Naive thymus-derived CD4-positive, alpha-beta T cell (primary cell): ENCODE measurements at regions of chr19 and their contacts with region 1.

Region 1: DNA sequence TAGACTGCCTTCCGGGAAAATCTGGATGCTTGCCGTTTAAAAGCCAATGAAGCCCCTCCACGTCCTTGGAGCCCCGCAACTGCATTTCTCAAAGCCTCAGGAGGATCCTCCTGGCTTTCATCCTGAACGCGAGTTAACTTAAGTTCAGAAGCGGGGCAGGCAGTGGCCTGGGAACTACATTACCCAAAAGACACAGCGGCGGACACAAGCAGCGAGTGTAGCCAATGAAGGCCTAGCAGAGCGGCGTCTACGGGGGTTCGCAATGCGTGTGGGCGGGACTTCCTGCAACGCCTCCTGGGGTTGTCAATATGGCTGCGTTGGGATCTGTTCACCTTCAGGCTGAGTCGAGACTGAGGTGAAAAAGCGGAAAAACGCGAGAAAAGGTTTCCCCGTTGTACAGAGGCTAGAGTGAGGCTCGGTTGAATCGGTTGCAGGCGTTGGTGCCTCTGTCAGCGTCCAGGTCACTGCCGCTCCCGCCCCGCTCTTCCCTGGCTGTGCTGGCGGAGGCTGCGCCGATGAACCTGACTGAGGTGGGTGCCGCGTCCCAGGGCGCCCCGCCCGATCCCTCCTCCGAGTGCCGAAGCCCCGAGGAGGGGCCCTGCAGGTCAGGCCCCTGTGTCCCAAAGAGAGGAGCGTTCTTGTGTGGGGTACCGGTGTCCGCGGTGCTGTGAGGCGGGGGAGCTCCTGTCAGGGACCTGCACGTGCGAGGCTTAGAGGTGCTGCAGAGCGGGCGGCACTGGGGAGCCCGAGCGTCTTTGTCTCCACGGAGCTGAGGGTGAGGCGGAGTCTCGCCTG is at the start of gene ZNF17:
- DNase-seq: peak; percentile 72 to 95 (median 88)
- ATAC-seq: peak; percentile 100
- H3K4me3 ChIP-seq: peak within 1 kb of the TSS; percentile 80
- H3K4me3 Mint-ChIP-seq: peak within 1 kb of the TSS; percentile 85 to 97 (median 96)
- H3K27ac ChIP-seq: peak within 1 kb of the TSS; percentile 80
- H3K27ac Mint-ChIP-seq: peak within 1 kb of the TSS; percentile 78 to 96 (median 92)
- H3K4me1 ChIP-seq: peaks cover 3 to 8% of the 10 kb centered on the region in 2 donors
- H3K4me1 Mint-ChIP-seq: peaks cover 20 to 46% (median 34%) of the 10 kb centered on the region in 7 donors
- H3K27me3 ChIP-seq: no peaks in the 10 kb centered on the region
- H3K27me3 Mint-ChIP-seq: no peaks in the 10 kb centered on the region
- total RNA-seq, gene ZNF17: 9.3 to 27.8 (median 17.2) TPM

Region 2: DNA sequence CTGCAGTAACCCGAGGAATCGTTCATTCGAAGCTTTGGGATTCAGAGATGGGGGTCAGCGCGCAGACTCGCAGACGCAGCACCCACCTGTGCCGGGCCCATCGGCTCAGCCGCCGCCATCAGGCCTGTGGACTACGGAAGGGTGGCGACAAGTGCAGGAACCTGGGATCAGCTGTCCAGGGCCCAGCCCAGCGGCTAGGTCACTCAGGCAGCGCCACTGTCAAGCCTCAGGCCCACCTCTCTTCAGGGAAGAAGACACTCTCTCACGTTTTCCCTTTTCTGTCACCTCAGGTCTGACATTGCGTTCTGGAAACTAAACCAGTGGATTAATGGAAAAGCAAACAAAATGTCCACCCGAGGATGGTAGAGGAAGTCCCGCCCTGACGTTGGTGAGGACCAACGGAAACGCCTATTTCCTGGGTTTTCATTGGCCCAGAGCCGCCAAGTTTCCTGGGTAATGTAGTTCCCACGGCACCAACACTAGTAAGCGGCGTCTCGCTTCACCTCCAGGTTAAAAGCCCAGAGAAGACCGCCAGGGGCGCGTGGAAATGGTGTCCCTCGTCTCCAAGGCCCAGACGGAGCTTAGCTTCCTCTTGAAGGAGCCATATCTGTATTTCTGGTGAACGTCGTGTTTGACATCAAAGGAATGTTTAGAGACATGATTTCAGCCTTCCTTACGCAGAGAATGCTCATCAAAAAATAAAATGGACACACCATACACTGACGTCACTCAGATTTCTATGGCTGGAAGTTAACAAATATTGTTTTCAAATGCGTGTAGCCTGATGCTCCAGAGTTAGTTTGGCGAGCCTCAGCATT is 66.3 kb after region 1 on chr19 and contains the start of gene ZNF772:
- CTCF ChIA-PET with region 1: no interaction called
- POLR2A ChIA-PET with region 1: no interaction called
- intact Hi-C with region 1: loop called in 1 of 2 experiments (anchors 1 kb)
- DNase-seq: peak; percentile 55 to 96 (median 88)
- ATAC-seq: peak; percentile 99
- H3K4me3 ChIP-seq: peak within 1 kb of the TSS; percentile 80
- H3K4me3 Mint-ChIP-seq: peak within 1 kb of the TSS; percentile 87 to 95 (median 92)
- H3K27ac ChIP-seq: peak within 1 kb of the TSS; percentile 77
- H3K27ac Mint-ChIP-seq: peak within 1 kb of the TSS; percentile 84 to 96 (median 89)
- H3K4me1 ChIP-seq: peaks cover 5 to 12% of the 10 kb centered on the region in 2 donors
- H3K4me1 Mint-ChIP-seq: peaks cover 10 to 26% (median 19%) of the 10 kb centered on the region in 7 donors
- H3K27me3 ChIP-seq: no peaks in the 10 kb centered on the region
- H3K27me3 Mint-ChIP-seq: peaks cover 0 to 7% (median 0%) of the 10 kb centered on the region in 5 donors
- total RNA-seq, gene ZNF772: 1.5 to 20.5 (median 4.3) TPM

Region 3: DNA sequence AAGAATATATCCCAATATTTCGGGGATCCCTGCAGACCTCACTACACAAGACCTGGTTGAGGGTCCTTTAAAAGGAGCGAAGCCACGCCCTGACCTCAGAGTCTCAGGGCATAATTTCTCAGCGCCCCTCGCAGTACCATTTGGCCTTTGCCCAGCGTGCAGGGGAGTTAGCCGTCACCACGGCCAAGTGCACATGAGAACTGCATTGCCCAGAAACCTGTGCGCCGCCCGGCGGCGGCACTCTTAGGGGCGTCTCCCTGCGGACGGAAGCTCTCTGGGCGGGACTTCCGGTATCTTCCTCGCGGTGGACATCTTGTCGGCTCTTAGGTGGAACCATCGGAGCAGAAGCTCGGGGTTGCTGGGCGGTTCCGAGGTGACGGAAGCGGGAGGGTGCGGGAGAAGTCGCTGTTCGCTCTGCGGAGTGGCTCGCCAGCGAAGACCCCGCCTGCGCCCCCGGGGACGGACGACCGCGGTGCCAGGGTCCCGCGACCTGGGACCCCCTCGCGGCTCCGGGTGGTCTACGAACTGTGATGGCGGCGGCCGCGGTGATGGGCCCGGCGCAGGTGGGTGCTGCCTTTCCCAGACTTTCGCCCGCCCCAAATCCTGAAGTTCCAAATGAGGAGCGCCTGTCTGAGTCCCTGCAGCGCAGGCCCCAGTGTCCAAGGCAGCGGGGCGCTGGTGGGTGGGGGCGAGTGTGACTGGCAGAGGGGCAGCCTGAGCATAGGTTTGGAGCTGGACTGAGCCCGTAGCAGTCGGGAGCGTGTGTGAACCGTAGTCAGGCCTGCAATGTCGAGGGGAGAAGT is 203.1 kb after region 1 on chr19 and contains the start of gene ZNF134:
- CTCF ChIA-PET with region 1: no interaction called
- POLR2A ChIA-PET with region 1: no interaction called
- intact Hi-C with region 1: loop called in 1 of 2 experiments (anchors 1 kb)
- DNase-seq: peak; percentile 74 to 90 (median 84)
- ATAC-seq: peak; percentile 100
- H3K4me3 ChIP-seq: peak within 1 kb of the TSS; percentile 94
- H3K4me3 Mint-ChIP-seq: peak within 1 kb of the TSS; percentile 79 to 95 (median 90)
- H3K27ac ChIP-seq: peak within 1 kb of the TSS; percentile 76
- H3K27ac Mint-ChIP-seq: peak within 1 kb of the TSS; percentile 78 to 92 (median 86)
- H3K4me1 ChIP-seq: peaks cover 14 to 15% of the 10 kb centered on the region in 2 donors
- H3K4me1 Mint-ChIP-seq: peaks cover 18 to 43% (median 34%) of the 10 kb centered on the region in 7 donors
- H3K27me3 ChIP-seq: no peaks in the 10 kb centered on the region
- H3K27me3 Mint-ChIP-seq: no peaks in the 10 kb centered on the region
- total RNA-seq, gene ZNF134: 14.6 to 33.9 (median 25.7) TPM

Region 4: DNA sequence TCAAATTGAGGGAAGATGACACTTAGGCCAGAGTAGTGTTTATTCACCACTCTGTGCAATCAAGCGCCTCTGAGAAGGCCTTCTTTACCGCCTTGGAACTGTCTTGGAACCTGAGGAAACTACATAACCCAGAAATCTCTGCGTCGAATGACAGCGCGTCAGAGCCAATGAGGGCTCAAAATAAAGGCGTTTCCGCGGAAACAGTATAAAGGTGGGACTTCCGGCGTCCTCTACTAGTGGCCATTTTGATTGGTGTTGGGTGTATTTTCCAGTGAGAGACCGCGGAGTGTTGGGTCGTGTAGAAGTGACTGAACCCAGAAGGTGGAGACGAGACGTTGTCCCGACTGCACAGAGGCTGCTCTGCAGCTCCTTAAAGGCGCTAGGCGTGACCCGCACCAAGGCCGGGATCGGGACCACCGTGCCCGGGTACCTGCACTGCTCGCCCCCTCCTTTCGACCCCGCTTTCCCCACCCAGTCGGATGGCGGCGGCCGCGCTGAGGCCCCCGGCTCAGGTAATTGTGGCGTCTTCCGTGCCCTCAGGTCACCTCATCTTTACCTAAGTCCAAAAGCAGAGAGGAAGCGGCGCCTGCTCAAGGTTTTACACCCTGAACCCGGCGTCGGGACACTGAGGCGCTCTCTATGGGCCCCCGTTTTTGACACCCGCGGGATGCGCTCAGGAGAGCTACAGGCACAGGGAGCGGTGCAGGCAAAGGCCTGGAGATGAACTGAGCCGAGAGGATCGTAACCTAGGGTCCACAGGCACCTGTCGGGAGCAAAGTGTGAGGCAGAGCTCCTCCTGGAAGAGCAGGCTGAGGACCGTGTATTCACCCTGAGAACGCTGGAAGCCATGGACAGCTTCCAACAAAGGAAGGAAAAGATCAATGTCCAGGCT is 335.8 kb after region 1 on chr19 and contains the start of gene ZNF776:
- CTCF ChIA-PET with region 1: no interaction called
- POLR2A ChIA-PET with region 1: no interaction called
- intact Hi-C with region 1: loop called (anchors 1 to 5 kb)
- DNase-seq: peak; percentile 40 to 90 (median 84)
- ATAC-seq: peak; percentile 99
- H3K4me3 ChIP-seq: peak within 1 kb of the TSS; percentile 86
- H3K4me3 Mint-ChIP-seq: peak within 1 kb of the TSS; percentile 91 to 99 (median 94)
- H3K27ac ChIP-seq: peak within 1 kb of the TSS; percentile 85
- H3K27ac Mint-ChIP-seq: peak within 1 kb of the TSS; percentile 81 to 99 (median 94)
- H3K4me1 ChIP-seq: peaks cover 6 to 16% of the 10 kb centered on the region in 2 donors
- H3K4me1 Mint-ChIP-seq: peaks cover 13 to 40% (median 26%) of the 10 kb centered on the region in 7 donors
- H3K27me3 ChIP-seq: no peaks in the 10 kb centered on the region
- H3K27me3 Mint-ChIP-seq: no peaks in the 10 kb centered on the region
- total RNA-seq, gene ZNF776: 18.9 to 52.3 (median 21.8) TPM

Region 5: DNA sequence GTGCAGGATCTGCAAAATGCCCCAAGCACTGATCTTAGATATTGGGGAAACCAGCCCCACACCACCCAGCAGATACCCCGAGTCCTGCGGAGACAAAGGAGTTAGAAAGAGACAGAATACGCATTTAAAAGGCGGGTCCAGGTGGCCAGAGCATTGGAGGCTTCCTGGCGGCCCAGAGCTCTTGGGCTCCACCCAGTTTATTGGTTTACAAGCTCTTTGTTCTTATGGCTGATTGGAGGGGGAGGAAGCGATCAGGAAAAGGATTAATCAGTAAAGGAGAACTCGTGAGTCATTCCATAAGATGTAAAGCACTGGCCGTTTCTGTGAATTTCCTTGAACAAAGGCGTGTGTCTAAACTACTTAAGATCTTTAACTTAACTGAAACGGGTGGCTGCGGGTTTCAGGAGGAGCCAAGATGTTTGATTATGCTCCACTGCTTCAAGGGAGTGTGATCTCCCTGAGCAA is 439.5 kb after region 1 on chr19:
- CTCF ChIA-PET with region 1: no interaction called
- POLR2A ChIA-PET with region 1: no interaction called
- intact Hi-C with region 1: loop called in 1 of 2 experiments (anchors 1 kb)
- DNase-seq: no peak
- ATAC-seq: no peak
- H3K4me3 ChIP-seq: peak overlapping the region; percentile 72
- H3K4me3 Mint-ChIP-seq: peak overlapping the region; percentile 93 to 97 (median 94)
- H3K27ac ChIP-seq: peak overlapping the region; percentile 92
- H3K27ac Mint-ChIP-seq: peak overlapping the region; percentile 90 to 98 (median 95)
- H3K4me1 ChIP-seq: peaks cover 7 to 11% of the 10 kb centered on the region in 2 donors
- H3K4me1 Mint-ChIP-seq: peaks cover 22 to 32% (median 28%) of the 10 kb centered on the region in 7 donors
- H3K27me3 ChIP-seq: no peaks in the 10 kb centered on the region
- H3K27me3 Mint-ChIP-seq: no peaks in the 10 kb centered on the region